ENCODE measurements at regions of chr5 and their contacts with region 1.

Region 1: GRCh38 chr5:179495906-179496455 is 54.4 kb upstream of the RUFY1 start:
- DNase-seq: no peak
- CTCF ChIP-seq: peak; percentile 44

Region 2: DNA sequence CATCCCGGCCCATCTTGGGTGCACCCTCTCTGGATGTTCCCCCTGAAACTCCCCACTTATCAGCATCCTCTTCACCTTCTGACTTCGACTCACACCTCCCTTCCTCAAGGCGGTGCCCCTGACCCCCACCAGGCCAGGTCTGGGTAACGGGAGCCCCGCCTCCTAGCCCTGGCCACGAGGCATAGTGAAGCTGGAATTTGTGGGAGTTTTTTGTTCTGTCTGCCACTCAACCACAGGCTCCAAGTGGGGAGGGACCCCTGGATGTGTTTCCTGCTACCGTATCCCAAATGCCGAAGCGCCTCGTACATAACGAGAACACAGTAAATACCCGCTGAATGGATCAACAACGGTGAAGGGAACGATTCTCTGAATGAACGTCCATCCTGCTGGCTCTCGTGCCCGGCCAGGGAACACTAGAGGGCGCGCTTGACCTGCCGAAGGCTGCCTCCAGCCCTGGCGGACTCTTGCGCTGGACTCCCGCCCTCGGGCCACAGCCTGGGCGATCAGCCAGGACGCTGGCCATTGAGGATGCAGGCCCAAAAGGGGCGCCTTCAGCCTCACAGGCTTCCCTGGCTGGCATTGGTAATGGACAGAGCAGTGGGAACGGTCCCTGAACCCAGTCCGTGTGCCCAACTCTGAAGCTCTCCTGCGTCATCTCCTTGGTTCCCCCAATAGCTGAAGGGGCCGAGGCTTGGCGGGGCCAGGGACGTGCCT is 1216.1 kb before region 1 on chr5:
- CTCF ChIA-PET with region 1: interaction called, 12 read pairs
- POLR2A ChIA-PET with region 1: no interaction called
- DNase-seq: peak; percentile 89
- CTCF ChIP-seq: peak; percentile 97

Region 3: DNA sequence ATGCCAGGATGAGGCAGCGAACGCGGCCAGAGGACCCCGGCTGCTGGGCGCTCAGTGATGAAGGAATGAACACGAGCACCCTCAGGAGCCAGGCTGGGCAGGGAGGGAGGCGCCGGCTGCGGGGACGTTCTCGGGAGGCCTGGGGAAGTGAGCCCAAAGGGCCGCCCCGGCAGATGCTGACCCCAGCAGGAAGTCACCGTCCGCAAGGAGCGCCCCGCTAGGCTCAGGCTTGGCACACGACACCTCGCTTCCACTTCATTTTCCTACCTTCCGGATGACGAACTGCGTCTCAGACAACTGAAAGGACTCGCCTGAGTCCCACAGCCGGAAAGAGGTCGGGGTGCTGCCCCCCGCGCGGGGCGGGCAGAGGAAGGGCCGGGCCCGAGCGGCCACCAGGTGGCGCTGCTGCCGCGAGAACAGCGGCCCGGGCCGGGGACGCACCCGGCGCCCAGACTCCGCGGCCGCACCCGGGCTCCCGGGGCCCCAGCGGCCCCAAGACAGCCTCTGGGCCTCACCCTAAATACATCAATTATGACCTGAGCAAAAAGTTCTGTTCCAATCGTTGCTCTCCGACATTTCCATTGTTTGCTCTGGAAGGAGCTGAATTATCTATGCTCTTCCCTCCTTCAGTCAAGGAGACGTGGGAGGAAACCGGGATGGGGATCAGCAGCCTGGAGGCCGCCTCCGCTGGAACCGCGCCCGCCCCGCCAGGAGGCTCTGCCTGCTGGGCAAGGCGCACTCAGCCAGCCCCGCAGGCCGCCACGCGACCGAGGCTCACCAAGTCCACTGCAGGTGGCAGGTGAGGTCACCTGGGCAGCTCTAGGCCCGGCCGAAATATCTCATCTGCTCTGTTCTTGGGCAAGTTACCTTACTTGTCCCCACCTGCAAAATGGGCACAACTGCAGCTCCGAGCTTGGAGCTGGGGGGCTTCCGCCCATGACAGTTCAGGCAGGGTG is 328.8 kb before region 1 on chr5:
- CTCF ChIA-PET with region 1: interaction called, 10 read pairs
- POLR2A ChIA-PET with region 1: no interaction called
- DNase-seq: peak; percentile 72
- CTCF ChIP-seq: peak; percentile 50

Region 4: DNA sequence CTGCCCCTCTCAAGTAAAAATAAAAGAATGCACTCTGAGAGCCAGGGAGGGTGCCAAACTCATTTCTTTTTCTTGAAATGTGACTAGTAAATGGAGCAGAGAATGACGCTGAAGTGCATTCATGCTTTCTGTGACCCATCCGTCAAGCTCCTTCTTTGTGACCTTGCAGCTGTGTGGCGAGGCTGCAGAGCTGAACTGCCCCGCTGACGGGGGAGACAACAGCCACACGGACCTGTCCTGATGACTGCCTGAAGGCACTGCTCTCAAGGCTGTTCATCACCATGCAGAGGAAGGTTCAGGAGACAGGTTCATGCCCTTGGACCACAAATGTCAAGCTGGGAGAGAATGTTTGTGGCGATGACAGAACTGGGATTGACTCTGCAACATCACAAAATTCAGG is 734.0 kb after region 1 on chr5:
- CTCF ChIA-PET with region 1: no interaction called
- POLR2A ChIA-PET with region 1: no interaction called
- DNase-seq: no peak
- CTCF ChIP-seq: no peak